ENCODE measurements at regions of chr4 and their contacts with region 1.

Region 1: GRCh38 chr4:1130316-1131186 is 17.2 kb upstream of the RNF212 start:
- DNase-seq: peak; percentile 95
- H3K4me3 Mint-ChIP-seq: no peak overlapping the region
- H3K27ac Mint-ChIP-seq: no peak overlapping the region
- H3K4me1 Mint-ChIP-seq: peaks cover 3% of the 10 kb centered on the region
- H3K27me3 Mint-ChIP-seq: peaks cover 24% of the 10 kb centered on the region

Region 2: GRCh38 chr4:1183985-1184773 is 53.6 kb after region 1 on chr4:
- intact Hi-C with region 1: no loop called
- DNase-seq: peak; percentile 59
- H3K4me3 Mint-ChIP-seq: peak overlapping the region; percentile 49
- H3K27ac Mint-ChIP-seq: peak overlapping the region; percentile 46
- H3K4me1 Mint-ChIP-seq: peaks cover 12% of the 10 kb centered on the region
- H3K27me3 Mint-ChIP-seq: no peaks in the 10 kb centered on the region

Region 3: DNA sequence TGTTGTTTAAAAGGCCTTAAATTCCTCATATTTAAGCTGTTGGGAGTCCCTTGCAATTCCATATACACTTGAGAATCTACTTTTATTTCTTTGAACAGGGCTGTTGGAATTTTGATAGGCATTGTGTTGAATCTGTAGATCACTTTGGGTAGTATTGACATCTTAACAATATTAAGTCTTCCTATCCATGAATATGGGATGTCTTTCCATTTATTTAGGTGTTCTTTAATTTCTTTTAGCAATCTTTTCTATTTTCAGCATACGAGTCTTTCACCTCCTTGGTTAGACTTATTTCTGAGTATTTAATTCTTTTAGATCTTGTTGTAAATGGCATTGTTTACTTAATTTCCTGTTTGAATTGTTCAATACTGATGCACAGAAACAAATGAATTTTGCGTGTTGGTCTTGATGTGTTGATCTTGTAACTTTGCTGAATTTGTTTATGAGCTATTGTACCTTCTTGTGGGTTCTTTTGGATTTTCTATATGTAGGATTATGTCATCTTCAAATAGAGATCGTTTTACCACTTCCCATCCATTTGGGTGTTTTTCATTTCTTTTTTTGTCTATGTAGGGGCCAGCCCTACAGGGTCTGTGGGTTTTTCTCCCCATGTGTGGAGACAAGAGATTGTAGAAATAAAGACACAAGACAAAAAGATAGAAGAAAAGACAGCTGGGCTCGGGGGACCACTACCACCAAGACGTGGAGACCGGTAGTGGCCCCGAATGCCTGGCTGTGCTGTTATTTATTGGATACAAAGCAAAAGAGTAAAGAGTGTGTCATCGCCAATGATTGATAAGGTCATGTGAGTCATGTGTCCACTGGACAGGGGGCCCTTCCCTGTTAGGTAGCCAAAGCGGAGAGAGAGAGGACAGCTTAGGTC is 136.6 kb after region 1 on chr4:
- intact Hi-C with region 1: loop called (anchors 1 kb)
- DNase-seq: no peak
- H3K4me3 Mint-ChIP-seq: peak overlapping the region; percentile 68
- H3K27ac Mint-ChIP-seq: peak overlapping the region; percentile 86
- H3K4me1 Mint-ChIP-seq: peaks cover 18% of the 10 kb centered on the region
- H3K27me3 Mint-ChIP-seq: no peaks in the 10 kb centered on the region

Region 4: DNA sequence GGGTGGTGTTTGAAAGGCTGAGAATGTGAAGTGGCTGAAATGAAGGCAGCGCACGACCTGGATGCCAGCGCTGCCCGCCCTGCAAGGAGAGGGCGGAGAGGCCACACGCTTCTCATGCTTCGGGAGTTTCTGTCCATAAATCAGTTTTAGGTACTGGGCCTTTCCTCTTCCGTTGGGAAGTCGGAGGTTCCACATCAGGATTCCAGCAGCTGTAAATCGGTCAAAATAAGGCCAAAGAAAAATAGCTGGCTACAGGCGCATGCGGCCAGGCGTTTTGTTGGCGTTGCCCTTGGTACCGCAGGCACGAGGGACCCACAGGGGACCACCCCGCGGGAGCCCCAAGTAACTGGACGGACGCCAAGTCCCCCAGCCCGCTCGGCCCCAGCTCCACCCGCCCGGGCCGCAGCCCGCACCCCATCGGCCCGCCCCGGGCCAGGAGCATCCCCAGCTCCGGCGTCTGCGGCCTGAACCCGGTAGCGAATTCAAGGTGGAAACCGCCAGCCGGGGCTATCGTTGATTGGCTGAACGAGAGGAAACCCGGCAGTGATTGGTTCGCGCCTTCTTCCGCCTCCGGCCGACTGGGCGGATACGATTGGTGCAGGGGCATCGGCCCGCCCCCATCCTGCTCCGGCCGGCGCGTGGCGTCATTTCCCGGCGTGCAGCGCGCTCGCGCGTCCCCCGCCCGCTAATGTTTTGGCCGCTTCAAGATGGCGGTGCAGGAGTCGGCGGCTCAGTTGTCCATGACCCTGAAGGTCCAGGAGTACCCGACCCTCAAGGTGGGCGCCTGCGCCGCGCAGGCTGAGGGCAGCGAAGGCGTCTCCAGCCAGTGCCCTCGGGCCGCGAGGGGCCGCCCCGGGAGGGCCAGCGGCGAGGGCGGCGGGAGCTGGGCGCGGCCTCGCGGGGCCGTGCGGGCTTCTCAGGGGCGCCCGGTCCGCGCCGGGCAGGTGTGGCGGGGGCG is 158.9 kb after region 1 on chr4 and contains the start of gene MAEA:
- intact Hi-C with region 1: loop called (anchors 1 kb)
- DNase-seq: peak; percentile 99
- H3K4me3 Mint-ChIP-seq: peak within 1 kb of the TSS; percentile 95
- H3K27ac Mint-ChIP-seq: peak within 1 kb of the TSS; percentile 90
- H3K4me1 Mint-ChIP-seq: peaks cover 26% of the 10 kb centered on the region
- H3K27me3 Mint-ChIP-seq: no peaks in the 10 kb centered on the region
- total RNA-seq, gene MAEA: 61.3 and 62.6 TPM in 2 replicates

Region 5: DNA sequence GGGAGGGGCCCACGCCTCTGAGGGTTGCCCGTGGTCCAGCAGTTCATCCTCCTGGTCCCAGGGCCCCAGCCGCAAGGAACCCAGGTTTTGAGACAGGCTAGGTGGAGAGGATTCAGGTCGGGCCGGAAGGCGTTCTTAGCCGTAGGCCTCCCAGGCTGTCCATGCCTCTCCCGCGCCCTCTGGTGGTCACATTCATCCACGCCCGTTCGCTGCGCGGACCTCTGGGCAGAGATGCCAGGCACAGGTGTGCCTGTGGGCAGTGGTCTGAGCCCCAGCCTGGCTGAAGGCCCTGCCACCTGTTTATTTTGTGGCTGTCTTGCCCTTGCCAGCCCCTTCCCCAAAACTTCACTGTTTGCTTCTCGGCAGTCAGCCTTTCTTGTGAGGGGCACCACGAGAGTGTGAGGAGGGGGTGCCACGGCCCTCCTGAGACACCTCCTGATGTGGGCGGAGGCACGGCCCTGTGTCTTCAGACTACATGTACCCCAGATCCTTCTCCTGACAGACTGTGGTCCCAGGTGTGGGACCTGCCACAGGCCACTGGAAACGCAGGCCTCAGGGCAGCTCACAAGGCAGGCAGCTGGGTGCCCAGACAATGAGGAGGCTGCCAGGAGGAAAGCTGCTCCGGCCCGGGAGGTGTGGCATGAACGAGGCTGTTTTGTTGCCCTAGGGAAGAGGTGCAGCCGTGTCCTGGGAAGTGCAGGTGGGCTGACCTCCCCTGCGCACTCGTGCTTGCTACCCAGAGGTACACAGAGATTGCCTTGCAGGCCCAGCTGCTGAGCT is 221.5 kb after region 1 on chr4:
- intact Hi-C with region 1: loop called (anchors 1 kb)
- DNase-seq: peak; percentile 97
- H3K4me3 Mint-ChIP-seq: no peak overlapping the region
- H3K27ac Mint-ChIP-seq: peak overlapping the region; percentile 72
- H3K4me1 Mint-ChIP-seq: peaks cover 22% of the 10 kb centered on the region
- H3K27me3 Mint-ChIP-seq: no peaks in the 10 kb centered on the region

Region 6: DNA sequence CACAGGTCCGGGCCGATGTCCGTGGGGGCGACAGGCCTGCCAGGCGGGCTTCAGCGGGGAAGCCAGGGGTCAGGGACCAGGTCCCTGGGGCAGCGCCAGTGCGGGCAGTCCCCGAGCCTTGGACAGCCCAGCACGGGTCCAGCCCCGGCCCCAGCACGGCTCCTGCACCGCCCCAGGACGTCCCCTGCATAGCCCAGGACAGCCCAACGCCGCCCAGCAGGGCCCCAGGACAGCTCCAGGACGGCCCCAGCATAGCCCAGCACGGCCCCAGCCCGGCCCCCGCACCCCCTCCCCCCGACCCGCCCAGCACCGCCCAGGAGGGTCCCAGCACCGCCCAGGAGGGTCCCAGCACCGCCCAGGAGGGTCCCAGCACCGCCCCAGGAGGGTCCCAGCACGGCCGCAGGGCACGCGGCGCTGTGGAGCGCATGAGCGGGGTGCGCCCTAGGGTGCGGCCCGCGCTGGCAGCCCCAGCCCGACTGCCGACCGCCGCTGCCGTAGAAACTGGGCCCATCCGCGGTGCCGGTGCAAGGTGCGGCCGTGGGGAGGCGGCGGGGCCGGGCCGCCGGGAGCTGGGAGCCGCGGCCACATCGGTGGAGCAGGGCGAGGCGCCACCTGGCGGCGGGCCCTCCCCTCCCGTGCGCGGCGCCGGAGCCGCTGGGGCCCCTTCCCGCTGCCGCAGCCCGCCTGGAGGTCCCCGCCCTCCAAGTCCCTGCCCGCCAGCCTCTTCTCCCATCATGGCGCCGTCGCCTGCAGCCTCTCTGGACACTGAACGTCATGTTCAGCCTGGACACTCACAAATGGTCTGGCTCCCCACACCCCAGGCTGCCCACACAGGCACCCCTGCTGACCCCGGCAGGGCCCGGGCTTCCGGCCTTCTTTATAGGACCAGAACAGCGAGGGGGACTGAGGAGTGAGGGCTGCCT is 382.4 kb after region 1 on chr4:
- intact Hi-C with region 1: loop called (anchors 1 kb)
- DNase-seq: peak; percentile 81
- H3K4me3 Mint-ChIP-seq: no peak overlapping the region
- H3K27ac Mint-ChIP-seq: no peak overlapping the region
- H3K4me1 Mint-ChIP-seq: no peaks in the 10 kb centered on the region
- H3K27me3 Mint-ChIP-seq: no peaks in the 10 kb centered on the region